Activated CD4-positive, alpha-beta T cell treated with anti-CD3 and anti-CD28 coated beads for 36 hours (primary cell): ENCODE measurements at regions of chr5 and their contacts with region 1.

Region 1: GRCh38 chr5:66821688-66822429 is 225.7 kb downstream of the MAST4 start:
- DNase-seq: peak; percentile 70
- ATAC-seq: peak; percentile 86
- H3K4me3 Mint-ChIP-seq: peak overlapping the region; percentile 18
- H3K27ac Mint-ChIP-seq: peak overlapping the region; percentile 86
- H3K4me1 Mint-ChIP-seq: peaks cover 28% of the 10 kb centered on the region
- H3K27me3 Mint-ChIP-seq: peaks cover 2% of the 10 kb centered on the region

Region 2: GRCh38 chr5:66492076-66492475 is 329.8 kb before region 1 on chr5:
- CTCF ChIA-PET with region 1: no interaction called
- POLR2A ChIA-PET with region 1: no interaction called
- intact Hi-C with region 1: no loop called
- DNase-seq: no peak
- ATAC-seq: no peak
- H3K4me3 Mint-ChIP-seq: no peak overlapping the region
- H3K27ac Mint-ChIP-seq: no peak overlapping the region
- H3K4me1 Mint-ChIP-seq: no peaks in the 10 kb centered on the region
- H3K27me3 Mint-ChIP-seq: peaks cover 13% of the 10 kb centered on the region

Region 3: GRCh38 chr5:67156976-67157583 is 335.2 kb after region 1 on chr5:
- CTCF ChIA-PET with region 1: interaction called, 3 read pairs
- POLR2A ChIA-PET with region 1: no interaction called
- intact Hi-C with region 1: loop called in 1 of 2 experiments (anchors 5 kb)
- DNase-seq: peak; percentile 65
- ATAC-seq: peak; percentile 40
- H3K4me3 Mint-ChIP-seq: no peak overlapping the region
- H3K27ac Mint-ChIP-seq: peak overlapping the region; percentile 1
- H3K4me1 Mint-ChIP-seq: peaks cover 40% of the 10 kb centered on the region
- H3K27me3 Mint-ChIP-seq: no peaks in the 10 kb centered on the region